Caco-2 (cell line): ENCODE measurements at regions of chr14 and their contacts with region 1.

Region 1: DNA sequence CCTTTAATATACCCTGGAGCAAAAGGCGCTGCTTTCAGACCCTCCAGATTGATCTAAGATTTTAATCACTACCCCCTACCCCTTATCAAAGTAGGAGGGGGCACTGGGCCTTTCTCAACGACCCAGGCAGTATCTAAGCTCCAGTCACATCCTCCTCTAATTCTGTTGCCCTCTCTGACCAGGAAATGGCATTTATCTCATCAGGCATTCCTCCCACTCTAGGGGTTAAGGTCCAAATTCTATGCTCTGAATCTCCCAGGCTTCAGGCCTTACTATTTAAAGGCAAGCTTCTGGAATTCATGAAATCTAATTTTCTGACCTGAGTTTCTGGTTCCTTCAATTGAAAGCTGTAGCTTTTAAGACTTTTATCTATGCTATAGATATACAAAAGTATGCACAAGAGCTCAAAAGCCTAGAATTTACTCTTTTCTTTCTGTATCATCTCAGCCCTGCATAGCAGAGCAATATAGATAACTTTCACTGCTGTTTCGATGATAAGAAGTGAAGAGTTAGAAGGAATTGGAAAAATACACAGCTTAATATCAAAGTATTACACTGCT is 622.9 kb downstream of the RPS29 start:
- DNase-seq: peak; percentile 76 to 78
- H3K4me3 ChIP-seq: no peak overlapping the region
- H3K4me3 Mint-ChIP-seq: peak overlapping the region; percentile 51
- H3K27ac Mint-ChIP-seq: peak overlapping the region; percentile 96
- H3K4me1 ChIP-seq: peaks cover 57% of the 10 kb centered on the region
- H3K4me1 Mint-ChIP-seq: peaks cover 49% of the 10 kb centered on the region
- H3K27me3 ChIP-seq: no peaks in the 10 kb centered on the region
- H3K27me3 Mint-ChIP-seq: no peaks in the 10 kb centered on the region
- CTCF ChIP-seq: no peak

Region 2: GRCh38 chr14:48616931-48617330 is 346.4 kb before region 1 on chr14:
- CTCF ChIA-PET with region 1: no interaction called
- POLR2A ChIA-PET with region 1: no interaction called
- intact Hi-C with region 1: no loop called
- DNase-seq: no peak
- H3K4me3 ChIP-seq: no peak overlapping the region
- H3K4me3 Mint-ChIP-seq: no peak overlapping the region
- H3K27ac Mint-ChIP-seq: no peak overlapping the region
- H3K4me1 ChIP-seq: no peaks in the 10 kb centered on the region
- H3K4me1 Mint-ChIP-seq: no peaks in the 10 kb centered on the region
- H3K27me3 ChIP-seq: no peaks in the 10 kb centered on the region
- H3K27me3 Mint-ChIP-seq: no peaks in the 10 kb centered on the region
- CTCF ChIP-seq: no peak

Region 3: GRCh38 chr14:48805315-48805714 is 158.0 kb before region 1 on chr14:
- CTCF ChIA-PET with region 1: no interaction called
- POLR2A ChIA-PET with region 1: no interaction called
- intact Hi-C with region 1: loop called (anchors 1 kb)
- DNase-seq: peak; percentile 74 to 87
- H3K4me3 ChIP-seq: no peak overlapping the region
- H3K4me3 Mint-ChIP-seq: peak overlapping the region; percentile 42
- H3K27ac Mint-ChIP-seq: peak overlapping the region; percentile 76
- H3K4me1 ChIP-seq: peaks cover 10% of the 10 kb centered on the region
- H3K4me1 Mint-ChIP-seq: peaks cover 16% of the 10 kb centered on the region
- H3K27me3 ChIP-seq: no peaks in the 10 kb centered on the region
- H3K27me3 Mint-ChIP-seq: no peaks in the 10 kb centered on the region
- CTCF ChIP-seq: no peak

Region 4: GRCh38 chr14:48914382-48914781 is 48.9 kb before region 1 on chr14:
- CTCF ChIA-PET with region 1: no interaction called
- POLR2A ChIA-PET with region 1: no interaction called
- intact Hi-C with region 1: loop called (anchors 2 kb)
- DNase-seq: peak; percentile 69 to 88
- H3K4me3 ChIP-seq: no peak overlapping the region
- H3K4me3 Mint-ChIP-seq: no peak overlapping the region
- H3K27ac Mint-ChIP-seq: no peak overlapping the region
- H3K4me1 ChIP-seq: peaks cover 29% of the 10 kb centered on the region
- H3K4me1 Mint-ChIP-seq: peaks cover 24% of the 10 kb centered on the region
- H3K27me3 ChIP-seq: no peaks in the 10 kb centered on the region
- H3K27me3 Mint-ChIP-seq: no peaks in the 10 kb centered on the region
- CTCF ChIP-seq: no peak

Region 5: DNA sequence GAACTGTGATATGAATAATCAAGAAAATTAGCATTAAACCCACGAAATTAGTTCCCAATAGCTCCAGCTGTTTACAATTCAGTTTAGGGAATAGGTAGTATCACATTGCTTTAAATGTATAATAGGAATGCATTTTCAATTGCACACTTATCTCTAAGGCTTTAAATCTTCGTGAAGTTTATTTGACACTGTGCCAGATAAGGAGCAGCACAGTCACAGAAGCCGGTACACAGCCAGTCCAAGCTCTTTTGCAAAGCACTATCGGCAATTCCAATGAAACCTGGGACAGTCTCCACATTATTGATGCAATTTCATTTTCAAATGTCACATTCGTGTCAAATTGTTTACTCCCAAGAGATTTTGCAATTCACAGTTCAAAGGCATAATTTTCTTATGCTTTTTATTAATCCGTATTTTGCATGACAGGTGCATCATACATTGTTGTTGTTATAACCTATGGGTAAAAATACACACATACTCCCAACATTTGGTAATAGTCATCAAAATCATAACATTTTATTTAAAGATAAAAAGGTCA is 20.1 kb after region 1 on chr14:
- CTCF ChIA-PET with region 1: no interaction called
- POLR2A ChIA-PET with region 1: no interaction called
- intact Hi-C with region 1: loop called (anchors 1 kb)
- DNase-seq: peak; percentile 47 to 69
- H3K4me3 ChIP-seq: no peak overlapping the region
- H3K4me3 Mint-ChIP-seq: no peak overlapping the region
- H3K27ac Mint-ChIP-seq: no peak overlapping the region
- H3K4me1 ChIP-seq: peaks cover 22% of the 10 kb centered on the region
- H3K4me1 Mint-ChIP-seq: peaks cover 5% of the 10 kb centered on the region
- H3K27me3 ChIP-seq: no peaks in the 10 kb centered on the region
- H3K27me3 Mint-ChIP-seq: no peaks in the 10 kb centered on the region
- CTCF ChIP-seq: no peak

Region 6: GRCh38 chr14:49017447-49017846 is 54.1 kb after region 1 on chr14:
- CTCF ChIA-PET with region 1: interaction called, 3 read pairs
- POLR2A ChIA-PET with region 1: no interaction called
- intact Hi-C with region 1: loop called (anchors 1 kb)
- DNase-seq: no peak
- H3K4me3 ChIP-seq: no peak overlapping the region
- H3K4me3 Mint-ChIP-seq: no peak overlapping the region
- H3K27ac Mint-ChIP-seq: no peak overlapping the region
- H3K4me1 ChIP-seq: peaks cover 36% of the 10 kb centered on the region
- H3K4me1 Mint-ChIP-seq: peaks cover 23% of the 10 kb centered on the region
- H3K27me3 ChIP-seq: no peaks in the 10 kb centered on the region
- H3K27me3 Mint-ChIP-seq: no peaks in the 10 kb centered on the region
- CTCF ChIP-seq: no peak

Region 7: DNA sequence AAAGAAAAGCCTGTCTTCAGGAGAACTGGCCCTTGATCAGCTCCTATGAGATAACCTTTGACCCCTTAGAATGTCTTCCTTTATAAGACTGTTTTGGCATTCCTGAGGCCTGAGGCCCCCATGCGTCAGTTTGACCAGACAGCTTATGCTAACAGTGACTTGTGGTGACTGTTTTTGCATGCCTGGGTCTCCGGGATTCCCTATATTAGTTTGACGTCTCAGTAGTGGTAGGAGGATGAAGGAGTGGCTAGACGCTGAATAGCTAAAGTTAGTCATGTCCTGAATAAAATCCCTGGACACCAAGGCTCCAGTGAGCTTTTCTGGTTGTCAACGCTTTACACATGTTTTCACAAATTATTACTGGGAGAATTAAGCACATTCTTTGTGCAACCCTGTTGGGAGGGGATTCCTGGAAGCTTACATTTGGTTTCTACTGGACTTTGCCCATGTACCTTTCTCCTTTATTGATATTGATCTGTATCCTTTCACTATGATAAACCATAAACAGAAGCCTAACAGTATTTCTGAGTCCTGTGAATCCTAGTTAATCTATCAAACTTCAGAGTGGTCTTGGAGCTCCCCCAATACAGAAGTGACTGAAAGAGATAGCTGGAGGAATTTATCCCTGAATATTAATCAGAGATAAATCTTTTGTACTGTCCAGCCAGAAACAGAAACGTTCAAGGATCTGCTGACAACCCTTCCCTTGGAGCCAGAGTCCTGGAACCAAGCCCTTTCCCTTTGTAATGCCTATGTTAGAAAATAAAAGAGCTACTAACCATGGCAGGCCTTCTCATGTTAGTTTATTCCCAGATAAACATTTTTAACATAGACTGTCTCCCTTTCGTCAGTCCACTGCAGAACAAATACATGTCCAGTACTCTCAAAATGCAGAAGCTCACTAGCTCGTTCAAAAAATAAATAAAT is 143.7 kb after region 1 on chr14:
- CTCF ChIA-PET with region 1: no interaction called
- POLR2A ChIA-PET with region 1: no interaction called
- intact Hi-C with region 1: loop called (anchors 2 kb)
- DNase-seq: peak; percentile 80 to 91
- H3K4me3 ChIP-seq: no peak overlapping the region; the same call in 1 of the 2 replicates
- H3K4me3 Mint-ChIP-seq: peak overlapping the region; percentile 42
- H3K27ac Mint-ChIP-seq: peak overlapping the region; percentile 76
- H3K4me1 ChIP-seq: peaks cover 32% of the 10 kb centered on the region
- H3K4me1 Mint-ChIP-seq: peaks cover 24% of the 10 kb centered on the region
- H3K27me3 ChIP-seq: no peaks in the 10 kb centered on the region
- H3K27me3 Mint-ChIP-seq: no peaks in the 10 kb centered on the region
- CTCF ChIP-seq: peak in 1 of 2 experiments; percentile 17